Right ventricle myocardium inferior (tissue), 1 donor: ENCODE measurements at regions of chr17 and their contacts with region 1.

Region 1: DNA sequence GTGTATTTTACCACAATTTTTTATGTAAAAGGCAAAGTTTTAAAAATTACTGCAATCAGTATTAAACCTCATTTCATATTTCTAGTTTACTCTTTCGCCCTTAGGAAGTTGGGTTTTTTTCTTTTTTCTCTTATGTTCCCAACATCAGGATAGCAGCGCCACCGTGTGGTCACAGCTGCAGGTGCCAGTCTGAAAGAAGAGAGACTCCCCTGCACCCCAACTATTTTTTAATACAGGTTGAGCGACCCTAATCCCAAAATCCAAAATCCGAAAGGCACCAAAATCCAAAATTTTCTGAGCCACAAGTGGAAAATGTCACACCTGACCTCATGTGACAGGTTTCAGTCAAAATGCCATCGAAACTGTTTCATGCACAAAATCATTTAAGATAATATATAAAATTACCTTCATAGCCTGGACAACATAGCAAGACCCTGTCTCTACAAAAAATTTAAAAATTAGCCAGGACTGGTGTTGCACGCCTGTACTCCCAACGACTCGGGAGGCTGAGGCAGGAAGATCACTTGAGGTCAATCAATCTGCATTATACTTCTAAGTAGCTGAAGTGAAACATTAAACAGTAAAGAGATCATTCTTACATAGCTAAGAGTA is 21.8 kb upstream of the ASGR2 start:
- DNase-seq: peak; percentile 92
- ATAC-seq: no peak

Region 2: DNA sequence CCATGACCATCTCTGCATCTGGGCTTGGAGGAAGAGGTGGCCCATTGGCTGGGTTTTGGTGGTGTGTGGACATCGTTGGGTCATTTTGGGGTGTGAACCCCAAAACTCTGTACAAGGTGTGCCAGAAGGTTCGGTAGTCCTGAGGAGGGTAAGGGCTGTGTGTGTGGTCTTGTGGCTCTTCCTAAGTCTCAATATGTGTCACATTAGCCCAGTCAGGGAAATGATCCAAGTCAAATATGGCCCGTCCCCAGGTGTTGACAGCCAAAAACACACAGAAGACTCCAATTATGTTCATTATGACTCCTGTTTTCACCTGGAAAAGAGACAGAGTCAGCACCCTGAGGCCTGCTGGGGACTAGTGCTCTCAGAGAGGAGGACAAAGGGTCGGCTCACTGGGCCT is 450.3 kb before region 1 on chr17:
- intact Hi-C with region 1: no loop called
- DNase-seq: no peak
- ATAC-seq: no peak

Region 3: GRCh38 chr17:7045909-7046724 is 90.3 kb before region 1 on chr17:
- intact Hi-C with region 1: loop called (anchors 1 kb)
- DNase-seq: no peak
- ATAC-seq: peak; percentile 48

Region 4: GRCh38 chr17:7056386-7056785 is 80.0 kb before region 1 on chr17:
- intact Hi-C with region 1: loop called (anchors 2 kb)
- DNase-seq: no peak
- ATAC-seq: no peak

Region 5: GRCh38 chr17:7191571-7192270 is 55.3 kb after region 1 on chr17:
- intact Hi-C with region 1: no loop called
- DNase-seq: no peak
- ATAC-seq: peak; percentile 65